ENCODE measurements at regions of chr17 and their contacts with region 1.

Region 1: DNA sequence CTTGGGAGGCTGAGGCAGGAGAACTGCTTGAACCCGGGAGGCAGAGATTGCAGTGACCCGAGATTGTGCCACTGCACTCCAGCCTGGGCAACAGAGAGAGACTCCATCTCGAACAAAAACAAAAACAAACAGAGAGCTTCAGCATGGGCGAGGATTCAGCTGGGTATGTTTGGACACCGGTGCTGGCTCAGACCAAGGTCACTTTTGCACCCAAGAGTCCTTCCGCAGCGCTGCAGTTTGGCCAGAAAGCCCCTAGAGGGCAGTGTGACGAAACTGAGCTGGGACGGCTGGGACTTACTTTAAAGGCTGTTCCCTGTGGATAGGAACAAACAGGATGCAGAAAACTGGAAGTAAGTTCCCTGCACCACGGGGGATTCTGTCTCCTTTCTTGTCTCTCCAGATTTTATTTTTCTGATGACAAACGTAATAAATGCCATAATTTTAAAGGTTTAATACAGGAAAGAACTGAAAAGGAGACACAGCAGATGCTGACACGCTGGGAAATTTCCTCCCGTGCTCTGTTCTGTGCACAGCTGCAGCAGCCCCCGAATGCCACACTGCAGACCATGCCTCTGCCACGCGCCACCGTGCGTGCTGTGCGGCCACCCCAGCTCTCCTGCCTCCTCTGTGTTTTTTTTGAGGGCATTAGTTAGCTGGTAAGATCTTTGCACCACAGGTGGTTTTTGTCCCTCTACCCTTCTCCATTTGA is 25.2 kb upstream of the USP36 start:
- DNase-seq: peak; percentile 91
- H3K4me3 ChIP-seq: no peak overlapping the region
- H3K27ac ChIP-seq: no peak overlapping the region
- H3K4me1 ChIP-seq: no peaks in the 10 kb centered on the region
- H3K27me3 ChIP-seq: no peaks in the 10 kb centered on the region
- CTCF ChIP-seq: peak; percentile 95

Region 2: DNA sequence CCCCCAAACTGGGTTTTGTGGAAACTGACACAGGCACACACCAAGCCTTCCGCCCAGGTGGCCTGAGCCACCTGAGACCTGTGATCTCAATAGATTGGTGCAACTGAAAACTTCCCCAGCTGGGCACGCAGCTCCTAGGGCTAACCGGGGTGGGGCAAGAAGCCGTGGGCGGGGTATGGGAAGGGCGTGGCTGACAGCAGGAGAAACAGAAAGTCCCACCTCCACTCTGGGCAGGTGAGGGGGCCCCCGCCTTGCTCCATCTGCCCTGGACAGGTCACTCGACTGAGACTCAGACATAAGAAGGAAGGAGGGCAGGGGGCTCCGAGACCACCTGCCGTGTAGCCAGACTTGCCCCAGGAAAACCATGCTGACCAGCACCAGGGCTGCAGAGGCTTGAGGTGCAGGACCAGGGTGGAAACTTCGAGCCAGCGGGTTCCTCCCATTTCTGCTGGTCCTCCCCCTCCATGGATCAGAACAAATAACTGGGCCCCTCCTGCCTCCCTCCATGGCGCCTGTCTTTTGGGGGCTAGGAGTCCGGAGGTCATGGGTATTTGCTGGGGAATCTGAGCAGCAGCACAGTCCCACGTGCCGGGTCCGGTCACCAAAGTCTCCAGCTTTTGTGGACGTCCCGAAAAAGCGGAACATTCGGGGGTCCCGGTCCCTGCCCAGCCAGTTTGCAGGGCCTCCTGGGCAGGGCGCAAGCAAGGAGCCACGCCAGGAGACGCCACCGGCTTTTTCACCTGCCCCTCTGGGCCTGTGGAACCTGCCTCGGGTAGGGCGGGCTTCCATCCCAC is 58.0 kb after region 1 on chr17:
- intact Hi-C with region 1: loop called (anchors 5 kb)
- DNase-seq: peak; percentile 94
- H3K4me3 ChIP-seq: peak overlapping the region; percentile 58
- H3K27ac ChIP-seq: peak overlapping the region; percentile 74
- H3K4me1 ChIP-seq: peaks cover 10% of the 10 kb centered on the region
- H3K27me3 ChIP-seq: no peaks in the 10 kb centered on the region
- CTCF ChIP-seq: no peak

Region 3: DNA sequence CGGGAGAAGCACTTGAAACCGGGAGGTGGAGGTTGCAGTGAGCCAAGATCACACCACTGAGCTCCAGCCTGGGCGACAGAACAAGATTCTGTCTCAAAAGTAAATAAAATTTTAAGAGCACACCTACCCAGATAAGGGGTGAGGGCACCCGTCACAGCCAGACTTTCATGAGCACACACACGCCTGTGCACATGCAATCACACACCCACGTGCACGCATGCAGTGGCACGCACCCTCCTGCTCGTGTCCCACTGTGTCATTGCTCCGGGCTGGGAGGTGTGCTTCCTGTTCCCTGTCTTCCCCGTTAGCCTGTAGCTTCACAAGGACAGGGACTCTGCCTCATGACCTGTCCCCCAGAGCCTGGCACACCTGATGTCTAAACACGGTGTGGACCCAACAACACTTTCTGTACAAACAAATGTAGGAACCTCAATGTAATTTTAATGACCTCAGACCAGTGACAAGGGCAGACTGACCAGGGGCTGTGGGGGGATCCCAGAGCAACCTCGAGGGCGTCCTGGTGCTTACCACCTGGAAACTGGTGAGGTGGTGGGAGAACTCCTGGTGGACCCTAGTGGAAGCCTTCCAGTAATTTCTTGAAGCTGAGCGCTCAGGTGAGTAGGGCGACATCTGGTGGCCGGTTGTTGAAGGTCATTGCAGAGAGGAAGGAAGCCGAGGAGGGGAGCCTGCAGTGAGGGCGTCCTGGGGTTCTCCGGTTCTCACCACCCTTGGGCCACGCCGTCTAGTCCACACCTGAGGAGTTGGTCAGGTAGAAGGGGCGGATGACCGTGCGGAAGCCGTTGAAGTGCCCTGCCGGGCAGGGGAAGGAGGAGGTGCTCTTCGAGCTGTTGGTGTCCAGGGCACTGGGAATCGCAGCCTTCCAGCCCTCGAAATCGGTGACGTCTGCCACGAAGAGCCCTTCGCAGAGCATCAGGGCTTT is 105.3 kb after region 1 on chr17:
- intact Hi-C with region 1: loop called (anchors 1 kb)
- DNase-seq: peak; percentile 87
- H3K4me3 ChIP-seq: no peak overlapping the region
- H3K27ac ChIP-seq: no peak overlapping the region
- H3K4me1 ChIP-seq: peaks cover 9% of the 10 kb centered on the region
- H3K27me3 ChIP-seq: no peaks in the 10 kb centered on the region
- CTCF ChIP-seq: peak; percentile 84

Region 4: DNA sequence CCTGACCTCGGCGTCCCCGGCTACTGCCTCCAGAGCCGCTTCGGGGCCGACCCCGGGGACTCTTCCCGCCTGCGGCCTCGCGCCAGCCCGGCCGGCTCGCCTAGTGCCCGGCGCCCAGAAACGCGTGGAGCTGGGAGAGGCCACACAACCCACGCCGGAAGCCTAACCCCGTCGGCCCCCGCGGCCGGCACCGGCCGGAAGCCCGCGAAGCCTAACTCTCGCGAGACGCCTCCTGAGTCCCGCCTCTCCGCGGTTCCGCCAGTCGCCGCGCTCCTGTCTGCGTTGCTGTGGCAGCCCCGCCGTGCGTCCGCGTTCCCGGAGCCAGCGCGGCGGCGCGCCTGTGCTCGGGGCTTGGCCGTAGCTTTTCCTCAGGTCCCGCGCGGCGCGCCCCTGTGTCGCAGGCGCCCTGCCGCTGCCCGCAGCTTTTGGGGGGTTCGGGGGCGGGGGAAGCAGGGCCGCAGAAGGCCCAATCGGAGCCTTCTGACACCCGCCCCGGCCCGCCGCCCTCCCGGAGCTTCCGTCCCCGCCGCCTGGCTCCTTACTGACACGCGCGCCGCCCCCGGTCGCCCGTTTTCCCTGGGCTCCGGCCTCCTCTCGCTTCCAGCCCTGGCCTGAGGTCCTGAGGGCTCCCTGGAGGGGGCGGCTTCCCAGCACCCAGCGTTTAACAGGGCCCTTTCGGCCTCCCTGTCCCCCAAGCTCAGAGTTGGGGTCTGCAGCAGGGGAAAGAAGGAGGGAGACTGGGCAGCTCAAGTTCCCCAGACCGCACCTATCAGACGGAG is 1588.9 kb after region 1 on chr17:
- intact Hi-C with region 1: no loop called
- DNase-seq: peak; percentile 96
- H3K4me3 ChIP-seq: peak overlapping the region; percentile 56
- H3K27ac ChIP-seq: peak overlapping the region; percentile 98
- H3K4me1 ChIP-seq: peaks cover 3% of the 10 kb centered on the region
- H3K27me3 ChIP-seq: no peaks in the 10 kb centered on the region
- CTCF ChIP-seq: no peak